Activated naive CD4-positive, alpha-beta T cell treated with anti-CD3 and anti-CD28 coated beads for 36 hours (primary cell): ENCODE measurements at regions of chr1 and their contacts with region 1.

Region 1: DNA sequence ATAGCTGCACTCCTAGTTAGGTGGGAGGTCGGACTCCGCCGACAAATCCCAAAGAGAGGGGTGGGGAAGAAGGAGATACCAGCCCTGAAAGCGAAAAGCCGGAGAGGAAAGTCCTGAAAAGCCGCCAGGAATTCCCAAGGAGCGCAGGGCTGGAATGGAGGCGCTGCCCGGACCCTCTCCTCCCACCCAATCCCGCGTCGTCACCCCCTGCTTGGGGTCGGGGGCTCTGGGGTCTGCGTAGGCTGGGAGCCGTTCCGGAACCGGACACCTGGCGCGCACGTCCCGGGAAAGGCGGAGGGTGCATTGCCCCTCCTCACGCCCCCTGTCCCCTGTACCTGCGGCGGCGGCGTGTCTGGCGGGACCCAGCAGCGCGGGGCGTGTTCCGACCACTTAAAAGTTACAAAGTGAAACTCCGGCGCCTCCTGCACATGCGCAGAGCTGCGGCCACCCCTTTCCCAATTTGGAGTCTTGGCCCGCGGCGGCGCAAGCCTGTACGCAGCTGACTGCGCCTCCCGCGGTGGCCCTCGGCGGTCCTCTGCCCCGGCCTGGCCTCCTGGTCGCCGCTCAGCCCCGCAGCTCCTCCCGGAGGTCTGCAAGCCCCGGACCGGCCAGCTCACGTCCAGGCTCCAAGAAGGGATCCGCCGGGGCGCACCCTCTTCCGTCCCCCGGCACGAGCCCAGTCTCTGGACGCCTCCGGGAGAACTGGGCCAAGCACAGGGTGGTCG is at the start of gene TMEM63A:
- DNase-seq: peak; percentile 88
- H3K4me3 Mint-ChIP-seq: peak within 1 kb of the TSS; percentile 92
- H3K27ac Mint-ChIP-seq: peak within 1 kb of the TSS; percentile 91
- H3K4me1 Mint-ChIP-seq: peaks cover 49% of the 10 kb centered on the region
- H3K27me3 Mint-ChIP-seq: no peaks in the 10 kb centered on the region
- total RNA-seq, gene TMEM63A: 34.3 to 34.7 TPM

Region 2: DNA sequence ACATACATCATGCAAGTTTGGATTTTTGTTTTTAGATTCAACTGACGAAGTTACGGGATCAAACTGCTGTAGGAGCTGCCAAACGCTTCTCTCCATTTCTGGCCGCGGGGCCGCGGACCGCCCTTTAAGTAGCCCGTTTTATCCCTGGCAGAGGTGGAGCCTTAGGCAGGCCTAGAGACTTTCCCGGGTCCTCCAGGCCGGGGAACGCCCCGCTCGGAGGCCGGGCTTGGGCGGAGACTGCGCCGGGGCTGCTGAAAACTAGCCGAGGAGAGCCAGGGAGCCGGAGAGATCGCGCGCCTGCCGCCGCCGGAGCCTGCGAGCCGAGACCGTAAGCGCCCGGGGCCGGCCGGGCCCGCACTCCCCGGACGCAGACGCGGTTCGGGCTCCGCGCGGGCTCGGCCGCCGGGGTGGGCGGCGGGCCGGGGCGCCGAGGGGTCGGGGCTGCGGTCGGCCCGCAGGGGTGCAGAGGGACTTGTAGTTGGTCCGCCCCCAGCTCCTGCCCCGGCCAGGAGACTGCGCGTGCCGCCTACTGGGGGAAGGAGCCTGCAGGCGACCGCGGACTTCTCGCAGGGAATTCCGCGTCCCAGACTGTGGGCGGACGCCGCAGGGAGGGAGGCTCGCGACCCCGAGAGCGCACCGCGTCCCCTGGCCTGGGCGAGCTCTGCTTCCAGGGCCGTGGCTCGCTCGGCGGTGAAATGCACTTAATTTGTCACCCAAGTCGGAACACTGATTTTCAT is 72.1 kb before region 1 on chr1 and contains the start of gene EPHX1:
- CTCF ChIA-PET with region 1: interaction called, 4 read pairs
- intact Hi-C with region 1: loop called (anchors 2 kb)
- DNase-seq: peak; percentile 79
- H3K4me3 Mint-ChIP-seq: peak within 1 kb of the TSS; percentile 71
- H3K27ac Mint-ChIP-seq: peak within 1 kb of the TSS; percentile 59
- H3K4me1 Mint-ChIP-seq: peaks cover 14% of the 10 kb centered on the region
- H3K27me3 Mint-ChIP-seq: no peaks in the 10 kb centered on the region
- total RNA-seq, gene EPHX1: 3.8 to 5.0 TPM

Region 3: GRCh38 chr1:225845571-225846259 is 36.4 kb before region 1 on chr1:
- CTCF ChIA-PET with region 1: no interaction called
- intact Hi-C with region 1: loop called (anchors 2 kb)
- DNase-seq: peak; percentile 49
- H3K4me3 Mint-ChIP-seq: no peak overlapping the region
- H3K27ac Mint-ChIP-seq: no peak overlapping the region
- H3K4me1 Mint-ChIP-seq: peaks cover 36% of the 10 kb centered on the region
- H3K27me3 Mint-ChIP-seq: no peaks in the 10 kb centered on the region

Region 4: GRCh38 chr1:225866061-225866837 is 15.9 kb before region 1 on chr1:
- CTCF ChIA-PET with region 1: interaction called, 4 read pairs
- intact Hi-C with region 1: loop called (anchors 1 kb)
- DNase-seq: peak; percentile 90
- H3K4me3 Mint-ChIP-seq: peak overlapping the region; percentile 4
- H3K27ac Mint-ChIP-seq: peak overlapping the region; percentile 79
- H3K4me1 Mint-ChIP-seq: peaks cover 43% of the 10 kb centered on the region
- H3K27me3 Mint-ChIP-seq: no peaks in the 10 kb centered on the region

Region 5: GRCh38 chr1:225896937-225897549 is 14.9 kb after region 1 on chr1:
- CTCF ChIA-PET with region 1: interaction called, 22 read pairs
- intact Hi-C with region 1: loop called (anchors 1 kb)
- DNase-seq: peak; percentile 87
- H3K4me3 Mint-ChIP-seq: peak overlapping the region; percentile 54
- H3K27ac Mint-ChIP-seq: peak overlapping the region; percentile 92
- H3K4me1 Mint-ChIP-seq: peaks cover 41% of the 10 kb centered on the region
- H3K27me3 Mint-ChIP-seq: no peaks in the 10 kb centered on the region

Region 6: GRCh38 chr1:225923692-225924555 is 41.8 kb after region 1 on chr1 and contains the start of gene PYCR2:
- CTCF ChIA-PET with region 1: interaction called, 4 read pairs
- intact Hi-C with region 1: loop called (anchors 1 kb)
- DNase-seq: peak; percentile 96
- H3K4me3 Mint-ChIP-seq: peak within 1 kb of the TSS; percentile 95
- H3K27ac Mint-ChIP-seq: peak within 1 kb of the TSS; percentile 90
- H3K4me1 Mint-ChIP-seq: peaks cover 59% of the 10 kb centered on the region
- H3K27me3 Mint-ChIP-seq: no peaks in the 10 kb centered on the region
- total RNA-seq, gene PYCR2: 143 to 149 TPM

Region 7: GRCh38 chr1:225942574-225942973 is 60.4 kb after region 1 on chr1:
- CTCF ChIA-PET with region 1: no interaction called
- intact Hi-C with region 1: no loop called
- DNase-seq: no peak
- H3K4me3 Mint-ChIP-seq: no peak overlapping the region
- H3K27ac Mint-ChIP-seq: no peak overlapping the region
- H3K4me1 Mint-ChIP-seq: peaks cover 8% of the 10 kb centered on the region
- H3K27me3 Mint-ChIP-seq: no peaks in the 10 kb centered on the region

Region 8: GRCh38 chr1:226074046-226074445 is 191.9 kb after region 1 on chr1:
- CTCF ChIA-PET with region 1: no interaction called
- intact Hi-C with region 1: no loop called
- DNase-seq: no peak
- H3K4me3 Mint-ChIP-seq: no peak overlapping the region
- H3K27ac Mint-ChIP-seq: peak overlapping the region; percentile 0
- H3K4me1 Mint-ChIP-seq: peaks cover 22% of the 10 kb centered on the region
- H3K27me3 Mint-ChIP-seq: no peaks in the 10 kb centered on the region